Left ventricle myocardium inferior (tissue), 1 donor: ENCODE measurements at regions of chr4 and their contacts with region 1.

Region 1: GRCh38 chr4:139416073-139416673 is 37.7 kb upstream of the RAB33B start:
- DNase-seq: no peak
- H3K4me3 ChIP-seq: no peak overlapping the region
- H3K27ac ChIP-seq: no peak overlapping the region
- H3K4me1 ChIP-seq: peaks cover 7% of the 10 kb centered on the region
- H3K27me3 ChIP-seq: no peaks in the 10 kb centered on the region
- CTCF ChIP-seq: peak; percentile 76

Region 2: DNA sequence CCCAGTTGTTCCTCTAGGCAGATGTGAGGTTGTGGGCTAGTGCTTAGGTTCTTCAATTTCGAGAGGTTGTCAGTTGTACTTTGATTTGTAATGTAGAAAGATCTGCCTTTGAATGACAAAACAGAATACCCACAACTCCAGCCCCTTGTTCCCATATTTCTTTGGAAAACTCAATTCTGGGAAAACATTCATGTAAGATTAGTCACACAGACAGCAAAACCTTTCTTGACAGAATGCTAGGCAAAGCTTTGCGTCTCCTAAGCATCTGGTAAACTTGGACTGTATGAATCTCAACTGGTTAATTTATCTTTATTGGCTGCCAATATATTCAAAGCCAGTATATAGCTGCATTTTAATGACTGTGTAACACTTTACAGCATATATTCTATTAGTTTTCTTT is 365.7 kb before region 1 on chr4:
- intact Hi-C with region 1: no loop called
- DNase-seq: no peak
- H3K4me3 ChIP-seq: no peak overlapping the region
- H3K27ac ChIP-seq: no peak overlapping the region
- H3K4me1 ChIP-seq: peaks cover 28% of the 10 kb centered on the region
- H3K27me3 ChIP-seq: no peaks in the 10 kb centered on the region
- CTCF ChIP-seq: no peak

Region 3: DNA sequence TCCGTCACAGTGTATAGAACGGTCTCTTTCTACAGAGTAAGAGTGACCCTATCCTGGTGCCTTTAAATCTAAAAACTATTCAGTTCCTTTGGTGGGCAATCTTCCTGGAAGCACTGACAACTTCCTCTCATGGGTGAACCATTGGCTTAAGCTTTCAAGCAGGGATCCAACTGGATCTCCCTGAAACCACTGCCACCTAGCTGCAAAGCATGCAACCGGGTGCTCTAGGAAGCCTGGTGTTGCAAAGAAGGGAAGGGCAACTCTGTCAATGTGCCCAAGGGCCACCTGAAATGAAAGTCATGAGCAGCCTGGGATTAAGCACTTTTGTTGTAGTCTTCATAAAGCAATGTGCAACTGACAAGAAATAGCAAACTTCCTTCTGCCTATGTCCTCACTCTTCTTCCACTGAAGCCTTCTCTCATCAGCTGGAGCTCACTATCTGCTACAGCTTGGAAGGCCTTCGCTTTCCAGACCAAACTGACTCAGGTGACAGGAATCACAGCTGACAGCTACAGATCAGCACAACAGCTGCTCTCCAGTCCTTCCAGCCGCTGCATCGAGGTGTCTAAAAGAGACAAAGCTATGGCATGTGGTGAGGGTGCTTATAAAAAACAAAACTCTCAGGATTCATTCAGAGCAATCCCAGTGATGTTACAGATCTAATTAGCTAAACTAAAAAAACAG is 93.7 kb after region 1 on chr4:
- intact Hi-C with region 1: loop called (anchors 10 kb)
- DNase-seq: no peak
- H3K4me3 ChIP-seq: no peak overlapping the region
- H3K27ac ChIP-seq: peak overlapping the region; percentile 35
- H3K4me1 ChIP-seq: peaks cover 32% of the 10 kb centered on the region
- H3K27me3 ChIP-seq: no peaks in the 10 kb centered on the region
- CTCF ChIP-seq: peak; percentile 71